Left ventricle myocardium superior (tissue), 1 donor: ENCODE measurements at regions of chr6 and their contacts with region 1.

Region 1: GRCh38 chr6:8219352-8219943 is 117.1 kb upstream of the EEF1E1 start:
- DNase-seq: no peak
- ATAC-seq: peak; percentile 43

Region 2: DNA sequence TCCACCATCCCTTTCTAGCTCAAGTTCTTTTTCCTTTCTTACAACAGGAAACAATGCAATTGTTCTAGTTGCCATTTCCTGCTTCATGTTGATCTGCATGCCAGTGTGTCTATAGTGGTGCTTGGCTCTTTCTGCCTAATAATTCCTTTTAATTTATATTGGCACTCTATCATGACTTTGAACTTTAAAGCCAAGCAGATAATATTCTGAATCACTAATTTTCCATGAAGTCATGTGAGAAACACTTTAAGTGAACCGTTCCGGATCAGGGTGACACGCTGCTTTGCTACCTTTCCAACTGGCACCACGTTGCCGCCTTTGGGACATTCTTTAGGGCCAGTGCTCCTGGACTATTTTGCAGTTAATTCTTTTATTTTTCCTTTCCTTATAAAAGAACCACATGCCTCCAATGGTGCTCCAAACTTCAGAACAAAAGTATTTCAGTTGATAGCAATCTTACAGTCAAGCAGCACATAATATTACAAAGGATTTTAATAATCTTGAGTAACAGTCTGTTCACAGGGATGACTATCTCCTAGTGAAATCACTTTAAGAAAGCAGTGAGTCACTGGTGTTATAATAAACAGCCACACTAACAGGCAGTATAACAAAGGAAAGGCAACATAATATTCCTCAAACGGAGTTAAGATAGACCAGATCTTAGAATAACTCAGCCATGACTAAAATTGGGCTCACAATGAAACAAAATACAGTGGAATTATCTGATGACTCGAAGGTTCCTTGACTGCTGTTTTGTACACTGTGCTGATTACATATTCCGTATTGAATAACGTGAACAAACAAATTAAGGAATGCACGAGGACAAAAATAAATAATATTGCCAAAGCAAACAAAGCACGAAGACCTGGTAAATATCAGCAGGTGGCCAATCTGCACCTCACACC is 136.2 kb before region 1 on chr6:
- intact Hi-C with region 1: no loop called
- DNase-seq: no peak
- ATAC-seq: peak; percentile 48

Region 3: GRCh38 chr6:8131256-8131897 is 88.1 kb before region 1 on chr6:
- intact Hi-C with region 1: loop called (anchors 5 kb)
- DNase-seq: no peak
- ATAC-seq: peak; percentile 66